ENCODE measurements at regions of chr1 and their contacts with region 1.

Region 1: DNA sequence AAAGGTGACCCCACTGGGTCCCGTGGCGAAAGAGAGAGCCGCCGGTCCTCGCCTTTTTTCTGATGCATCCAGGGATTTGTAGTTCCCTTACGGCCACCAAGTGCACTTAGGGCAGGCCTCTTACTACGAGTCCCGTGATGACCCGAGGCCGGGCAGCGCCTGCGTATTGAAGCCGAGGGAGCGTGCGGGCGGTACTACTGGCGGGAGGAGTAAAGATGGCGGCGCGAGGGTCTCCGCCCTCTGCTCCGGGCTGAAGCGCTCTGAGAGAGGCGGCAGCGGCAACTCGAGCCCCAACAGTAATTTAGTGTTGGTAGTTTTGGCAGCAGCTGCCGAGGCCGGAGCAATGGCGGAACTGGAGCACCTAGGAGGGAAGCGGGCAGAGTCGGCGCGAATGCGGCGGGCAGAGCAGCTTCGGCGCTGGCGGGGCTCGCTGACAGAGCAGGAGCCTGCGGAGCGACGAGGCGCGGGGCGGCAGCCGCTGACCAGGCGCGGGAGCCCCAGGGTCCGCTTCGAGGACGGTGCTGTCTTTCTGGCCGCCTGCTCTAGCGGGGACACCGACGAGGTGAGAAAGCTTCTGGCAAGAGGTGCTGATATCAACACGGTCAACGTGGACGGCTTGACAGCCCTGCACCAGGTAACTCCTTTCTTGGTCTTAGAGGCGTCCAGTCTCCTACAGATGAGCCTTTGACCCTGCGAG is at the start of gene PPP1R12B:
- DNase-seq: peak; percentile 98 to 99 (median 99)
- ATAC-seq: peak; percentile 99 to 100
- H3K4me3 ChIP-seq: peak within 1 kb of the TSS; percentile 75
- H3K27ac ChIP-seq: peak within 1 kb of the TSS; percentile 93
- H3K4me1 ChIP-seq: no peaks in the 10 kb centered on the region
- H3K27me3 ChIP-seq: no peaks in the 10 kb centered on the region
- total RNA-seq, gene PPP1R12B: 574 to 741 (median 606) TPM

Region 2: GRCh38 chr1:202046227-202046801 is 302.3 kb before region 1 on chr1:
- intact Hi-C with region 1: no loop called
- DNase-seq: no peak
- ATAC-seq: peak in 1 of 2 donors; percentile 42
- H3K4me3 ChIP-seq: no peak overlapping the region
- H3K27ac ChIP-seq: no peak overlapping the region
- H3K4me1 ChIP-seq: no peaks in the 10 kb centered on the region
- H3K27me3 ChIP-seq: no peaks in the 10 kb centered on the region

Region 3: GRCh38 chr1:202255343-202255742 is 93.3 kb before region 1 on chr1:
- intact Hi-C with region 1: no loop called
- DNase-seq: no peak
- ATAC-seq: no peak
- H3K4me3 ChIP-seq: no peak overlapping the region
- H3K27ac ChIP-seq: no peak overlapping the region
- H3K4me1 ChIP-seq: no peaks in the 10 kb centered on the region
- H3K27me3 ChIP-seq: no peaks in the 10 kb centered on the region

Region 4: DNA sequence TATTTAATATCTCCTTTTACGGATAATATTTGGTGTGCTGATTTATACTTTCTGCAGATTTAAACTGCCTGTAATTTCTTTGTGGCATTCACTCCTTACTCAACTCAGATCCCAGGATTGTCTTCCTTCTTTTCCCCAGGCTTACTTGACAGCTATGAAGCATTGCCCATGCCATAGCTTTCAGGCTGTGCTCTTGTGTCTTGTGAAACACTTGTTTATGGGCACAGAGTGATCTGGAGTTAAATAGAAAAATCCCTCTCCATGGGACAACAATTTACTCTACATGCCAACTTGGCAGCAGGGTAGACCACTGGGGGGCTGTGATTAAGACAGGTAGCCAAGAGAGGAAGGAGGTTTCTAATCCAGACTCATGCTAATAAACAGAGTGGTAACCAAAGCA is 57.3 kb after region 1 on chr1:
- intact Hi-C with region 1: loop called in 1 of 4 experiments (anchors 10 kb)
- DNase-seq: no peak
- ATAC-seq: peak in 1 of 2 donors; percentile 30
- H3K4me3 ChIP-seq: no peak overlapping the region
- H3K27ac ChIP-seq: peak overlapping the region; percentile 81
- H3K4me1 ChIP-seq: peaks cover 2% of the 10 kb centered on the region
- H3K27me3 ChIP-seq: no peaks in the 10 kb centered on the region

Region 5: DNA sequence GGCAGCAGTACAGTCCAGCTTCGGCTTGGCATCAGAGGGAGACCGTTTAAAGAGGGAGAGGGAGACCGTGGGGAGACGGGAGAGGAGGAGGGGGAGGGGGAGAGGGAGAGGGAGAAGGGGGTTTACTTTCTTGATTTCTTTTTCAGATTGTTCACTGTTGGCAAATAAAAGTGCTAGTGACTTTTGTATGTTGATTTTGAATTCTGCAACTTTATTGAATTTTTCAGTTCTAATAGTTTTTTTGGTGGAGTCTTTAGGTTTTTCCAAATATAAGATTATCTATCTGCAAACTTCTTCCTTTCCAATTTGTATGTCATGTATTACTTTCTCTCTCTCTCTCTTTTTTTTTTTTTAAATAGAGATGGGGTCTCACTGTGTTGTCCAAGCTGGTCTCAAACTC is 103.8 kb after region 1 on chr1:
- intact Hi-C with region 1: loop called in 1 of 4 experiments (anchors 10 kb)
- DNase-seq: no peak
- ATAC-seq: no peak
- H3K4me3 ChIP-seq: no peak overlapping the region
- H3K27ac ChIP-seq: no peak overlapping the region
- H3K4me1 ChIP-seq: no peaks in the 10 kb centered on the region
- H3K27me3 ChIP-seq: no peaks in the 10 kb centered on the region

Region 6: DNA sequence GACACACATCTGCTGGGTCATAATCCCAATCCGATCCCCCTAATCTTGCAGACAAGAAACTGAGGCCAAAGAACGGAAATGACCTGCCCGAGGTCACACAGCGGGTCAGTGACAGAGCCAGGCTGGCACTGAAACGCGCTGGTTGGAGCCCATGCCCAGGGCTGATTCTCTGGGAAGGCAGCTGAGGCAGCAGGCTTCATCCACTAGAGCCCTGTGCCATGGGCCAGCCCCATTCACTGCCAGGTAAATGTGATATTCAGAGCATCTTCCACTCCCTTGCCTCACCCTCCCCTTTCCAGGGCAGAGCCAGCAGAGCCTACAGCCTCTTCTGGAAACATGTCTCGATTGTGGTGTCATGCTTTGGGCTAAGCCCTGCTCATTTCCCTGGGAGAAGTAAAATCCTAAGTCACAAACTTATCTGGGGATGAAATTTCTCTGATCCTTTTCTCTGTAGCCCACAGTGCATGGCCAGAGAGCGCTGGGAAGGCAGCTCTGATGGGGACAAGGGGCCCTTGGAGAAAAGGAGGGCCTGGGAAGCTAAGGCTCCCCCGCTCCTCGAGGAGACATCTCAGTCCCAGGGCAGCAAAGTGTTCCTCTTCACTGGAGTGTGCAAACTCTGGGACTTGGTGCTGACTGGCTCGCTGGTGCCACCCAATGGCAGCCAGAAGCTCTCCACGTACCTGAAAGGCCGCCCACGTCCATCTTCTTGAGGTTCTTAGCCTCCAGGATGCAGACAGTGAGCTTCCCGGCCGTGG is 251.2 kb after region 1 on chr1:
- intact Hi-C with region 1: loop called in 1 of 4 experiments (anchors 10 kb)
- DNase-seq: peak; percentile 59 to 86 (median 77)
- ATAC-seq: peak; percentile 70 to 82
- H3K4me3 ChIP-seq: no peak overlapping the region
- H3K27ac ChIP-seq: peak overlapping the region; percentile 23
- H3K4me1 ChIP-seq: no peaks in the 10 kb centered on the region
- H3K27me3 ChIP-seq: no peaks in the 10 kb centered on the region